Psoas muscle (tissue), 8 donors: ENCODE measurements at regions of chr4 and their contacts with region 1.

Region 1: DNA sequence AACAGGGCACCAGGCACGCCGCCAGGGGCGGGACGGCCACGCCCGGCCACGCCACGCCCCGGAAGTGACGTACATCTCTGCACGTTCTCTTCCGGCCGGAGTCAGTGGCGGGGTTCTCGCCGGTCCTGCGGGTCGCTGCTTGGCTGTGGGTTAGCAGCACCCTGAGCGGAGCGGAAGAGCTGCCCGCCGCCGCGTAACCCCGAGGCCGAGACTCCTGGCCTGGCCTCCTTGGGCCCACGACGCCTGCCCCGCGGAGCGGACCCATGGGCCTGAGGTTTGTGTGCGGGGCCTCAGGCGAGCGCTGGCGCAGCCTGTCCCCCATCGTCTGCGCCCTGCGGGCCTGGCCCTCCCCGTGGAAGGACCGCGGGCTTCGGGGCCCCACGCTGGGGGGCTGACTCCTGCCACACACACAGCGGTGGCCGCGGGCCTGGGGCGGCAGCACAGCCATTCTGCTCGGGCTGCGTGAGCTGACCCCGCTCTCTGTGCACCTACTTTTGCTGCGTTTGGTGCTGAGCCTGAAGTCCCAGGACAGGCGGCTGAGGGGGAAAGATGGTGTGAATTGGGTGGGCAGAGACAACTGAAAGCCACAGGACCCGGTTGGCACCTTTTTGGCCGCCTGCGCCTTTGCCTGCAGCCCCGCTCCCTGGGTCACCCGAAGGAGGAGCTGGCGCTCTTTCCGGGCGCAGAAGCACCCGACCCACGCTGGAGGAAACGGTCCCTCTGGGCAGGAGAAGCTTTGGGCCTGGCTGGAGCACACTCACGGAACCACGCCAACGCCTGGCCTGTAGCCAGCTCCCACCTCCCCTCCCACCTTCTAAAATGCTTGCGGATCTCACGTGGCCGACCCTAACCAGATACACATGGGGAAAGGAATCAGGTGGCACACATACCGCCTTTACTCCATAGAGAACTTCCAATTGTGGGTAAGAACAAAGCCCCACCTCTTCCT is 28.1 kb downstream of the NOP14 start:
- DNase-seq: peak; percentile 96 to 98
- ATAC-seq: peak; percentile 80 to 83 (median 82)
- H3K4me3 ChIP-seq: peak overlapping the region; percentile 100
- H3K27ac ChIP-seq: peak overlapping the region; percentile 97
- H3K4me1 ChIP-seq: peaks cover 55% of the 10 kb centered on the region
- H3K27me3 ChIP-seq: no peaks in the 10 kb centered on the region
- CTCF ChIP-seq: no peak

Region 2: GRCh38 chr4:2745981-2746806 is 188.9 kb before region 1 on chr4:
- intact Hi-C with region 1: no loop called
- DNase-seq: peak; percentile 63 to 67
- ATAC-seq: peak; percentile 59 to 80 (median 76)
- H3K4me3 ChIP-seq: no peak overlapping the region
- H3K27ac ChIP-seq: peak overlapping the region; percentile 72
- H3K4me1 ChIP-seq: peaks cover 18% of the 10 kb centered on the region
- H3K27me3 ChIP-seq: no peaks in the 10 kb centered on the region
- CTCF ChIP-seq: no peak

Region 3: GRCh38 chr4:2843263-2843940 is 91.7 kb before region 1 on chr4 and contains the start of gene ADD1:
- intact Hi-C with region 1: loop called in 1 of 2 experiments (anchors 5 kb)
- DNase-seq: peak; percentile 90 to 95
- ATAC-seq: peak; percentile 96 to 99 (median 98)
- H3K4me3 ChIP-seq: peak within 1 kb of the TSS; percentile 81
- H3K27ac ChIP-seq: peak within 1 kb of the TSS; percentile 89
- H3K4me1 ChIP-seq: peaks cover 41% of the 10 kb centered on the region
- H3K27me3 ChIP-seq: no peaks in the 10 kb centered on the region
- CTCF ChIP-seq: no peak
- total RNA-seq, gene ADD1: 163 to 214 (median 187) TPM

Region 4: DNA sequence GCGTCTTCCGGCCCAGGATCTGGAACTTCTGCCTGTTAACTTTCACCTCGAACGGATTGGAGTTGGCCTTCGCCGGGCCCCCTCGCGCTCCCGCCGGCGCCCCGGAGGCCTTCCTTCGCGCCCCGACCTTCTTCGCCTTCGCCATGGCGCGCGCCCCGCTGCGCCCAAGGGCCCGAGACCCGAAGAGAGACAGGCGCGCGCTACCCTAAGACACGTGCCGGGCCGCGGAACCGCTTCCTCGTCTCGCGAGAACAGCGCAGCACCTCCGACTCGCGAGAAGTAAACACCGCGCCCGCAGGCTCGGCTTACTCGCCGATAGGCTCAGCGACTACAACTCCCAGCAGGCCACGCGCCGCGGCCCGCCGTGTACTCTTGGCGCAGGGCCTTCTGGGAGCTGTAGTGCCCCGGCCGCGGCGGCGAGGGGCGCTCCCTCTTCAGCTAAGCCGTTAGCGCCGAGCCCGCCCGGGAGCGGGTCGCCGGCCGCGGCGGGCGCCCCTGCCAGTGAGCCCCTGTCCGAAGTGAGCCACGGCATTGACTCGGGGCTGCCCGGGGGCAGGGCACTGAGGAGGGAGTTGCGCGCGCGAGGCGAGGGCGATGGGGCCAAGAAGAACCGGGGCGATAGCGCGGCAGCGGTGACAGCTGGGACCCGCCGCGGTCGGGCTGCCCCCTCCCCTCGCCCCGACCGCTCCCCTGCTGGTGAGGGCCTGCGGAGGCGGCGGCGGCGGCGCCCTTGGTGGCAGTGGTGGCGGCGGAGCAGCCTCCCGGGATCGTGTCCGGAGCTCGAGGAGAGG is 28.3 kb after region 1 on chr4 and contains the starts of genes GRK4 and NOP14:
- intact Hi-C with region 1: loop called in 1 of 2 experiments (anchors 2 kb)
- DNase-seq: peak; percentile 98 to 99
- ATAC-seq: peak; percentile 93 to 95 (median 94)
- H3K4me3 ChIP-seq: peak within 1 kb of the TSS; percentile 96
- H3K27ac ChIP-seq: peak within 1 kb of the TSS; percentile 98
- H3K4me1 ChIP-seq: peaks cover 25% of the 10 kb centered on the region
- H3K27me3 ChIP-seq: peaks cover 0 to 1% (median 0%) of the 10 kb centered on the region in 3 donors
- CTCF ChIP-seq: peak; percentile 43
- total RNA-seq, gene GRK4: 5.9 to 7.9 (median 6.9) TPM
- total RNA-seq, gene NOP14: 28.0 to 45.1 (median 43.9) TPM